Right cardiac atrium (tissue), 5 donors: ENCODE measurements at regions of chr14 and their contacts with region 1.

Region 1: GRCh38 chr14:90060312-90060964 is 1.4 kb upstream of the KCNK13 start:
- DNase-seq: peak; percentile 62 to 86 (median 83)
- ATAC-seq: peak; percentile 76 to 88
- H3K4me3 ChIP-seq: peak overlapping the region; percentile 58
- H3K27ac ChIP-seq: no peak overlapping the region
- H3K4me1 ChIP-seq: no peaks in the 10 kb centered on the region
- H3K27me3 ChIP-seq: no peaks in the 10 kb centered on the region

Region 2: GRCh38 chr14:89870316-89870715 is 190.1 kb before region 1 on chr14:
- intact Hi-C with region 1: no loop called
- DNase-seq: no peak
- ATAC-seq: no peak
- H3K4me3 ChIP-seq: no peak overlapping the region
- H3K27ac ChIP-seq: no peak overlapping the region
- H3K4me1 ChIP-seq: no peaks in the 10 kb centered on the region
- H3K27me3 ChIP-seq: no peaks in the 10 kb centered on the region

Region 3: DNA sequence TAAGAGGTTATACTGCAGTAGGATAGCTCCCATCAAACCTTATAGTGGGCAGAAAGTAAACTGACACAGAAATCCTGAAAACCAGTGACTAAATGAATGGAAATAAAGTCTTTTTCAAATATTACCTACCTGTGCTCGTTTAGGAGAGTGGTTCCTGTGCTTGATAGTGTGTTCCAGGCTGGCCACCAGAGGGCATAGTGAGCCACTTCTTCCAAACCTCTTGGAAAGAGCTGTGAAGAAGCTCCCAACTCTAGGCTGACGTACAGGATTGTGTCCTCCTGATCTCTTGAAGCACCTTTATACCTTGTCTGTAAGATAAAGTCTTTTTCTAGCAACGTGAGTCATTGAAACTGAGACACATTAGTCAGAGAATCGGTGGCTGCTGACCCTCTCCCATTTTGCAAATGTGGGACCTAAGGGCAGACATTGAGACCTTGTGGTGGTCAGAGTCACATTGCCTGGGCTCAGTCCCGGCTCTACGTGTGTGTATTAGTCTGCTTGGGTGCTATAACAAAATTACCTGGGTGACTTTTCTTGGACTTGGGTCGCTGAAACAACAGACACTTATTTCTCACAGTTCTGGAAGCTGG is 87.1 kb before region 1 on chr14:
- intact Hi-C with region 1: loop called in 2 of 4 experiments (anchors 5 kb)
- DNase-seq: peak; percentile 61 to 79 (median 78)
- ATAC-seq: peak; percentile 85 to 90
- H3K4me3 ChIP-seq: no peak overlapping the region
- H3K27ac ChIP-seq: no peak overlapping the region
- H3K4me1 ChIP-seq: no peaks in the 10 kb centered on the region
- H3K27me3 ChIP-seq: no peaks in the 10 kb centered on the region

Region 4: DNA sequence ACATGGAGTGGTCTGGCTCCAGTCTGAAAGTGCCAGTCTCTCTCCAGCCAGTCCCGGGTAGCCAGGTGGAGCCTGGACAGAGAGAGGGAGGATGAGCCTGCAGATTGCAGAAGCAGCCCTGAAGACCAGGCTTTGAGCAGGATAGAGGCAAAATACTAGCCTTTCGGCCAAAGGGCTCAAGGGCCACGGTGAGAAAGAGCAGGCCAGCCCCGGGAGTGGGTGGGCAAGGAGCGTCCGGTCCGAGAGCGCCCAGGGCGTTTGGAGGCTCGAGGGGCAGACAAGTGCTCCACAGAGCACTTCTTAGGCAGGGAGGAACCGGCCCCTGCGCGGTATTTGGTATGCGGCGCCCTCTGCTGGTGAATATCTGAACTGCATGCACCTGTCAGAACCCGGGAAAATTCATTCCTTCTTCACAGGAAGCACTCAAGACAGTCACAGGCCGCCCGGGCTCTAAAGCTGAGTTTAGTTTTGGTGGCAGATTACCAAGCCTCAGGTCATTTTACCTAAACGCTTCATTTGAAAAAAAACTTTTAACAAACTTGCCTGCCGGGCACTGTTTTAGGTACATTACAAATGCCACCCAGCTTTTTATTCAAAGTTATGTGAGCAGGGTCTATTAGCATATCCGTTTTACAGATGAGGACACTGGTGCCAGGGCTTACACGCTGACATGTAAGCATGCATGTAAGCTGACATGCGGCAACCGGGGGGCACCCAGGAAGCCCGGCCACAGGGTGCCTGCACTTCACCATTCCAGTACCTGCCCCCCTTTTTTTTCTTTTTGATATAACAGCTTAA is 174.9 kb after region 1 on chr14:
- intact Hi-C with region 1: loop called in 2 of 4 experiments (anchors 5 to 10 kb)
- DNase-seq: peak; percentile 57 to 84 (median 72)
- ATAC-seq: peak; percentile 81 to 93
- H3K4me3 ChIP-seq: no peak overlapping the region
- H3K27ac ChIP-seq: no peak overlapping the region
- H3K4me1 ChIP-seq: no peaks in the 10 kb centered on the region
- H3K27me3 ChIP-seq: no peaks in the 10 kb centered on the region